PC-9 (cell line): ENCODE measurements at regions of chr12 and their contacts with region 1.

Region 1: GRCh38 chr12:6778574-6779550 is 6.5 kb downstream of the LAG3 start:
- DNase-seq: peak; percentile 86 to 98
- H3K4me3 ChIP-seq: peak overlapping the region; percentile 47; the same call in 1 of the 2 replicates
- H3K27ac ChIP-seq: no peak overlapping the region
- H3K4me1 ChIP-seq: no peaks in the 10 kb centered on the region
- H3K27me3 ChIP-seq: no peaks in the 10 kb centered on the region
- CTCF ChIP-seq: peak; percentile 98

Region 2: DNA sequence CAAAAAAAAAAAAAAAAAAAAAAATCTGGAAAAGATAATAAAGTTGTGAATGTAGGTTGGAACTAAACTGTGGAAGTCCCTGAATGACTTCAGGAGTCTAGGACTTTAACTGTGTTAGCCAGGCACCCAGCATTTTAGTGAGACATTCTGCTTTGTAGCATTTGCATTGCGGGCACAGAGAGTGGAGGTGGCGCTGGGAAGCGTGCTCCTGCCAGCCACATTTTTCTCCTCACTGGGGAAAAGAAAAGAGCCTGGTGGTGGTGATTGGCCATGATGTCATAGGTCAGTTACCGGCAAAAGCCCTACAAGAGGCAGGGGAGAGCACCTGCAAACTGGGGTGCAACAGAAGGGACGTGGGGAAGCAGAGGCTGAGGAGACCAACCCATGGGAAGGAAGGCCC is 254.2 kb before region 1 on chr12:
- CTCF ChIA-PET with region 1: no interaction called
- POLR2A ChIA-PET with region 1: no interaction called
- intact Hi-C with region 1: no loop called
- DNase-seq: no peak
- H3K4me3 ChIP-seq: no peak overlapping the region
- H3K27ac ChIP-seq: no peak overlapping the region
- H3K4me1 ChIP-seq: peaks cover 19% of the 10 kb centered on the region
- H3K27me3 ChIP-seq: no peaks in the 10 kb centered on the region
- CTCF ChIP-seq: no peak

Region 3: DNA sequence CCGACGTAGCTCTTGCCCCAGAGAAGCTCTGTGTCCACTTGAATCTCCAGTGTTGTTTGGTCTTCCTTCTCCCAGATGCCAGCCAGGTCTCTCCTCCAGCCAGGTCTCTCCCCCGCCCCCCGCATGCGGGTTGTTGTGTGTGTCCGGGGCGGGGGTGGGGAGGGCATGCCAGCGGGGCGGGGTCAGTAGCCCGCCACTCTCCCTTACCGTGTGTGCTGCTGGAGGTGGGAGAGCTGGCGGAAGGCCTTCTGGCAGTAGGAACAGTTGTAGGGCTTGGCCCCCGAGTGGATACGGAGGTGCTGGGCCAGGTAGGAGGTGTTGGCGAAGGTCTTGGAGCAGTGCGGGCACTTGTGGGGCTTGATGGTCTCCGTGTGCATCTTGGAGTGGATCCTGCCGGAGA is 106.7 kb before region 1 on chr12:
- CTCF ChIA-PET with region 1: no interaction called
- POLR2A ChIA-PET with region 1: no interaction called
- intact Hi-C with region 1: no loop called
- DNase-seq: no peak
- H3K4me3 ChIP-seq: no peak overlapping the region
- H3K27ac ChIP-seq: no peak overlapping the region
- H3K4me1 ChIP-seq: no peaks in the 10 kb centered on the region
- H3K27me3 ChIP-seq: no peaks in the 10 kb centered on the region
- CTCF ChIP-seq: no peak

Region 4: DNA sequence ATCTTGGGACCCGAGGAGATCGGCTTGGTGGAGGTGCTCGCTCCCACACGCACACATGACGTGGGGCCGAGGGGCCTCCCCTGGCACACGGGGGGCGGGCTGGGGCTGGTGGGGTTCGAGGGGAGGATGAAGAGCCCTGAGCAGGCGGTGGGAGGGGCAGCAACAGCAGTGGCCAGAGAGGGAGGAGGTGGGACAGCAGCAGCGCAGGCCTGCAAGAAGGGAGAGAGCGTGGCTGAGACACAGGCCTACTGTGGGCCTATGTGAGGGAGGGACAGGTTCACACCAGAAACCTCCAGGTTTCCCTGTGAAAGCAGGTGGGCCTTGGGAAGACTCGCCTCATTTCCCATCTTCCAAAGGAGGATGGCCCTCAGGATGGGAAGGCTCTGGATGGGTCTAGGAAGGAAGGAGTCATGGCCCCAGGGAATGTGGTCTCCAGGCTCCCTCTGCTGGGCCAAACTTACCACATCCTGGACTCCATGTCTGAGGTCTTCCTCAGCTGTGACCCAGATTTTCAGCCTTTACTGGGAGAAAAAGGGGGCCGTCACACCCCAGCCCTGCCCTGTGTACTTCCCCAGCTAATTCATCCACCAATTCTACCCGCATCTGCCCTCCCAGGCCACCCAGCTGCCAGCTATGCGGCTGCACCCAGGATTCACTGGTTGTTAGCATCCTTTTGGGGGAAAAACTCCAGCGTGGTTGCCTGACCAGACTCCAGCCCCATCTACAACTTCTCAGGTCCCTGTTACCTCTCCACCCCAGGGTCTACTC is 81.1 kb before region 1 on chr12:
- CTCF ChIA-PET with region 1: interaction called, 6 read pairs
- POLR2A ChIA-PET with region 1: no interaction called
- intact Hi-C with region 1: loop called (anchors 1 kb)
- DNase-seq: peak; percentile 43 to 68
- H3K4me3 ChIP-seq: no peak overlapping the region
- H3K27ac ChIP-seq: no peak overlapping the region
- H3K4me1 ChIP-seq: no peaks in the 10 kb centered on the region
- H3K27me3 ChIP-seq: peaks cover 43% of the 10 kb centered on the region
- CTCF ChIP-seq: peak; percentile 74

Region 5: GRCh38 chr12:6735448-6736191 is 43.2 kb before region 1 on chr12:
- CTCF ChIA-PET with region 1: interaction called, 3 read pairs
- POLR2A ChIA-PET with region 1: no interaction called
- intact Hi-C with region 1: loop called (anchors 1 kb)
- DNase-seq: peak; percentile 44 to 70
- H3K4me3 ChIP-seq: no peak overlapping the region
- H3K27ac ChIP-seq: no peak overlapping the region
- H3K4me1 ChIP-seq: no peaks in the 10 kb centered on the region; the same call in 1 of the 2 replicates
- H3K27me3 ChIP-seq: no peaks in the 10 kb centered on the region
- CTCF ChIP-seq: peak; percentile 84

Region 6: DNA sequence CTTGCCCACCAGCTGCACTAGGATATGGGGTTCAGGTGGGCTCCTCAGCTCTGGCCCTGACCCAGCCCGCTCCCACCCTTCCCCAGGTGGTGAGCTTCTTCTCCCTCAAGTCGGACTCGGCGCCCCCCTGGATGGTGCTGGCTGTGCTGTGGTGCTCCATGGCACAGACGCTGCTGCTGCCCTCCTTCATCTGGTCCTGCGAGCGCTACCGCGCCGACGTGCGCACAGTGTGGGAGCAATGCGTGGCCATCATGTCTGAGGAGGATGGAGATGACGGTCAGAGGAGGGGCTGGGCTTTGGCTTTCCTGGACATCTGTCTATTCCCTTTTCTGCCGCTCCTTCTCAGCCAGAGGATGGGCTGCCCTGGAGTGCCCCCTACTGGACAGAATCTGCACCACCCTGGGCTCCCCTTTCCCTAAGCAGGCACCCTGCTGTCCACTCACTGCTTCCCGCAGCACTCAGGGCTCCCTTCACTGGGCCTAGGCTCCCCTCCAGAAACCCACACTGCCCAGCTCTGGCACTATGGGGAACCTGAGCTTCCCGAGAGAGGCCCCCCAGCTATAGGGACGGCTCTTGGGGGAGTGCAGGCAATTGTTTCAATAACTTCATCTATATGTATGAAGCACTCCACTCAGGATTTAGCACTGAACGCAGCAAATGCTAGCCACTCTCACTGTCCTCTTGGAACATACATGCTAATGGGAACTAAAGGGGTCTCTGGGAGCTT is 46.7 kb after region 1 on chr12:
- CTCF ChIA-PET with region 1: interaction called, 4 read pairs
- POLR2A ChIA-PET with region 1: interaction called, 3 read pairs
- intact Hi-C with region 1: loop called (anchors 1 kb)
- DNase-seq: peak; percentile 68 to 93
- H3K4me3 ChIP-seq: no peak overlapping the region
- H3K27ac ChIP-seq: no peak overlapping the region
- H3K4me1 ChIP-seq: no peaks in the 10 kb centered on the region; the same call in 1 of the 2 replicates
- H3K27me3 ChIP-seq: peaks cover 97% of the 10 kb centered on the region
- CTCF ChIP-seq: peak; percentile 96